ENCODE measurements at regions of chr1 and their contacts with region 1.

Region 1: DNA sequence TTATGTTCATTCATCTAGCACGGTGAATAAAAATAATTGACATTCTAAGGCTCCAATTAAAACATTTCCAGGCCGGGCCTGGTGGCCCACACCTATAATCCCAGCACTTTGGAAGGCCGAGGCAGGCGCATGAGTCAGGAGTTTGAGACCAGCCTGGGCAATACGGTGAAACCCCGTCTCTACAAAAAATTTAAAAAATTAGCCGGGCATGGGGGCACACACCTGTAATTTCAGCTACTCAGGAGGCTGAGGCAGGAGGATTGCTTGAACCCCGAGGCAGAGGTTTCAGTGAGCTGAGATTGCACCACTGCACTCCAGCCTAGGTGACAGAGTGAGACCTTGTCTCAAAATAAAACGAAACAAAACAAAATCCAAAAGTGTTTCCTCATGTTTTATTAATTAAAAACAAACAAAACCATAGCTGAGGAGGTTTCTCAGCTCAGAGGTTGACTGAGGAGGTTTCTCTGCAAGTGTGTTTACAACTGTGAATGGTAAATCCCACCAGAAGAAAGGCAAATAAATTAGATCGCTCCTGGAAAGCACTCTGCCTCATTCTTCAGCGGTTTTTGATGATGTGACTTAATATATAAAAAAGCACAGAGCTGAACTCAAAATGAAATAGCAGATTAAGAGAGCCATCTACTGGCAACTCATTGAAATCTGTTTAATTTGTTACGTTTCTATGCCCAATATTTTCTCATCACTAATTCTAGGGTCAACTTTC is 37.7 kb upstream of the ATG4C start:
- DNase-seq: no peak
- H3K4me3 ChIP-seq: peak overlapping the region in 1 of 4 donors; percentile 21
- H3K27ac ChIP-seq: no peak overlapping the region
- H3K4me1 ChIP-seq: peaks cover 3 to 24% (median 16%) of the 10 kb centered on the region in 4 donors
- H3K27me3 ChIP-seq: no peaks in the 10 kb centered on the region
- CTCF ChIP-seq: peak; percentile 58 to 64 (median 64)
- EP300 ChIP-seq: no peak
- POLR2A ChIP-seq: no peak

Region 2: GRCh38 chr1:62514746-62515423 is 231.4 kb before region 1 on chr1:
- intact Hi-C with region 1: loop called (anchors 5 kb)
- DNase-seq: no peak
- H3K4me3 ChIP-seq: no peak overlapping the region
- H3K27ac ChIP-seq: no peak overlapping the region
- H3K4me1 ChIP-seq: no peaks in the 10 kb centered on the region
- H3K27me3 ChIP-seq: no peaks in the 10 kb centered on the region
- CTCF ChIP-seq: no peak
- EP300 ChIP-seq: no peak
- POLR2A ChIP-seq: no peak

Region 3: DNA sequence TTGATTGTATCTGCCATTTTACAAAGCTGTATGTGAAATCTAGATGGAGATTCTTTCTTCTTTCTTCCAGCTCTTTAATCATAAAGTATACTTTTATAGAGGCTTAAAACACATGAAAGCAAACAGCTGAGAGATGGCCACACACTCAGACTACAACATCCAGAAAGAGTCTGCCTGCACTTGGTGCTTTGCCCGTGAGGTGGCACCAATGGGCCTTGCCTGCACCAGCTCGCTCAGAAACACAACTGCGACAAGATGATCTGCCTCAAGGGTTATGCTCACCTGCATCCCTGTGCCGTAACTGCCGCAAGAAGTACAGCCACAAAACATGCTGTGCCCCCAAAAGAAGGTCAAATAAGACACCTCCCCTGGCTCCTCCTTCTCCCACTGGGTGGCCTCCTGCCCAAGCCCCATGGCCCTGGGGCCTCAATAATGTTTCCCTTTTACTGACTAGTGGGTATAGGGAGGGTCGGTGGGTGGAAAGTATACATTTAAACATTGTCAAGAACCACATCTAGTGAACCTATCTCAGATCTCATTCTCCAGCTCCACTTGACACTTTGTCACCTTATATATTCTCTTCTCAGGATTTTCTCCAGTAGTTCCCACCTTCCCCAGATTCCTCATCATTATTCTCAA is 215.6 kb before region 1 on chr1:
- intact Hi-C with region 1: loop called (anchors 5 kb)
- DNase-seq: no peak
- H3K4me3 ChIP-seq: no peak overlapping the region
- H3K27ac ChIP-seq: no peak overlapping the region
- H3K4me1 ChIP-seq: no peaks in the 10 kb centered on the region
- H3K27me3 ChIP-seq: no peaks in the 10 kb centered on the region
- CTCF ChIP-seq: peak; percentile 41 to 57 (median 41)
- EP300 ChIP-seq: no peak
- POLR2A ChIP-seq: no peak

Region 4: DNA sequence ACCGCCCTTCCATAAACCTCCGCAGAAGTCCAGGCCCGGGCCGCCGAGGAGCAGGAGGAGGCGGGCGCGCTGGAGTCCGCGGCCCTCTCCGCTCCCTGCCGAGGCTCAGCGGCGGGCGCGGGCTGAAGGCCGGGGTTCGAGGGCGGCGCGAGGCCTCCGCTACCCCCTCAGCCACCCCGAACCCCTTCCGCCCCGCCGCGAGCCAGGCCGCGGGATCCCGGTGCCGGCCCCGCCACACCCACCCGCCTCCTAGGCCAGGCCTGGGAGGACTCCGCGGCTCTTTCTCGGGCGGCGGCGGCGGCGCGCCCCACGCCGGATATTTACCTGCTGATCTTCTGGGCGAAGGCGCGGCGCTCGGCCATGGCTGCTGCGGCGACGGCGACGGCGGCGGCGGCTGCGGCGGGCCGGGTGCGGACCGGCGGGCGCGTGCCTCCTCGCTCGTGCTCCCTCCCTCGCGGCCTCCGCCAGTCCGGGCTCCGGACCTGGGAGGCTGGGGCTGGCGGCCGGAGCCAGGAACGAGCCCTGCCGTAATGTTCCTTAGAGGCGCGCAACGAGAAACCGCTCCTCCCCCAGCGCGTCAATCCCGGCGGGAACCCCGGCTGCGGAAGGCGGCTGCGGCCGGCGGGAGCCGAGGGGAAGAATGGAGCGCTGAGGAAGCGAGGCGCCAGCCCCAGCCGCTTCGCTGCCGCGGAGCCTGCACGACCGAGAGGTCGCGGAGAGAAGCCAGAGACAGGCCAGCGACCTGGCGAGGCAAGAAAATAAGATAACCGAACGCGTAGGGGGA is 58.2 kb before region 1 on chr1 and contains the start of gene DOCK7:
- intact Hi-C with region 1: loop called (anchors 5 kb)
- DNase-seq: peak; percentile 92
- H3K4me3 ChIP-seq: peak within 1 kb of the TSS; percentile 92 to 98 (median 96)
- H3K27ac ChIP-seq: peak within 1 kb of the TSS; percentile 80 to 92 (median 90)
- H3K4me1 ChIP-seq: peaks cover 28 to 74% (median 67%) of the 10 kb centered on the region in 4 donors
- H3K27me3 ChIP-seq: no peaks in the 10 kb centered on the region
- CTCF ChIP-seq: no peak
- EP300 ChIP-seq: no peak
- POLR2A ChIP-seq: no peak
- total RNA-seq, gene DOCK7: 27.7 to 66.7 (median 30.5) TPM